ENCODE measurements at regions of chr1 and their contacts with region 1.

Region 1: GRCh38 chr1:46179138-46180081 is 3.1 kb upstream of the P3R3URF start:
- DNase-seq: no peak
- ATAC-seq: peak; percentile 88
- H3K4me3 ChIP-seq: no peak overlapping the region
- H3K27ac ChIP-seq: no peak overlapping the region
- H3K4me1 ChIP-seq: peaks cover 18% of the 10 kb centered on the region
- H3K27me3 ChIP-seq: no peaks in the 10 kb centered on the region
- CTCF ChIP-seq: peak; percentile 88 to 94 (median 91); a peak in 5 of 6 replicates
- EP300 ChIP-seq: no peak
- POLR2A ChIP-seq: no peak
- RAD21 ChIP-seq: peak; percentile 99

Region 2: DNA sequence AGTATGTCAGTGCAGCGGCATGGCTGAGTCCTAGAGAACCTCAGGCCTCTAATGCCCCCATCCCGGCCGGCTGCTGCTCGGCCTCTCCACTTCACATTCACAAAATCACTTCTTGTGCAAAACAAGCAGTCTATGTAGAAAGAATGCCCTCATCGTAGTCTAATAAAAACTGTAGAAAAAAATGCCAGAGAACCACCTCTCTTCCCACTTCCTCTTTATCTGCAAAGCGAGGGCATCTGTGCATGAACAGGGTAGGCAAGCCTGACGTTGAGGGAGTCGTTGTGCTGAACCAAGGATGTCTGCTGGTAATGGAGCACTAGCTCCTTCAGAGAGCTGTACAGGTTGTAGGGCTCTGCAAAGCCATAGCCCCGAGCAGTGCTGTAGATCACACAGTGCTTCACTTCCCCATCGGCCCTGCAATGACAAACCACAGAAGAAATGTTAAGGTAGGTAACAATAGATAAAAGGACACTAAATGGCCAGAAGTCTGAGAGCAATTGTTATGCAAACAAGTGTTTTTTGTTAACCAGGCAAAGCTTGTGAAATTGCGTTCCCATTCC is 135.9 kb before region 1 on chr1:
- CTCF ChIA-PET with region 1: interaction called, 293 read pairs
- POLR2A ChIA-PET with region 1: interaction called, 3 read pairs
- RAD21 ChIA-PET with region 1: interaction called, 9 read pairs
- SMC1A ChIA-PET with region 1: interaction called, 52 read pairs
- in situ Hi-C with region 1: loop called (anchors 5 kb)
- intact Hi-C with region 1: no loop called
- DNase-seq: peak; percentile 92
- ATAC-seq: peak; percentile 97
- H3K4me3 ChIP-seq: no peak overlapping the region
- H3K27ac ChIP-seq: peak overlapping the region; percentile 80
- H3K4me1 ChIP-seq: peaks cover 35% of the 10 kb centered on the region
- H3K27me3 ChIP-seq: no peaks in the 10 kb centered on the region
- CTCF ChIP-seq: no peak
- EP300 ChIP-seq: peak in 1 of 2 experiments; percentile 54; a peak in 2 of 4 replicates
- POLR2A ChIP-seq: peak; percentile 52; the same call in 1 of the 2 replicates
- RAD21 ChIP-seq: no peak; the same call in 1 of the 2 replicates

Region 3: DNA sequence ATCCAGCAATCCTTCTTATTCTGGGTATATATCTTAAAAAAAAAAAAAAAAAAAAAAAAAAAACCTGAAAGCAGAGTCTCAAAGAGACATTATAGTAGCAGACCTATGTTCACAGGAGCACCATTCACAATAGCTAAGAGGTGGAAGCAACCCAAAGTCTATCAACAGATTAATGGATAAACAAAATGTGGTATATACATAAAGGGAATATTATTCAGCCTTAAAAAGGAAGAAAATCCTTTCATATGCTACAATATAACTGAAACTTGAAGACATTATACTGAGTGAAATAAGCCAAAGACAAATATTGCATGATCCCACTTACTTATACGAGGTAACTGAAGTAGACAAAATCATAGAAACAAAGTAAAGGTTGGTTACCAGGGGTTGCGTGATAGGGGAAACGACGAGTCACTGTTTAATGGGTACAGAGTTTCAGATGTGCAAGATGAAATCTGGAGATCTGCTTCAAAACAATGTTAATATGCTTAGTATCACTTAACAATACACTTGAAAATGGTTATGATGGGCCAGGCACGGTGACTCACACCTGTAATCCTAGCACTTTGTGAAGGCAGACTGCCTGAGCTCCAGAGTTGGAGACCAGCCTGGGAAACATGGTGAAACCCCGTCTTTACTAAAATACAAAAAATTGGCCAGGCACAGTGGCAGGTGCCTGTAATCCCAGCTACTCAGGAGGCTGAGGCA is 76.5 kb before region 1 on chr1:
- CTCF ChIA-PET with region 1: no interaction called
- POLR2A ChIA-PET with region 1: no interaction called
- RAD21 ChIA-PET with region 1: no interaction called
- SMC1A ChIA-PET with region 1: no interaction called
- in situ Hi-C with region 1: no loop called
- intact Hi-C with region 1: no loop called
- DNase-seq: no peak
- ATAC-seq: no peak
- H3K4me3 ChIP-seq: no peak overlapping the region
- H3K27ac ChIP-seq: no peak overlapping the region
- H3K4me1 ChIP-seq: peaks cover 15% of the 10 kb centered on the region
- H3K27me3 ChIP-seq: no peaks in the 10 kb centered on the region
- CTCF ChIP-seq: no peak
- EP300 ChIP-seq: no peak
- POLR2A ChIP-seq: no peak
- RAD21 ChIP-seq: no peak

Region 4: DNA sequence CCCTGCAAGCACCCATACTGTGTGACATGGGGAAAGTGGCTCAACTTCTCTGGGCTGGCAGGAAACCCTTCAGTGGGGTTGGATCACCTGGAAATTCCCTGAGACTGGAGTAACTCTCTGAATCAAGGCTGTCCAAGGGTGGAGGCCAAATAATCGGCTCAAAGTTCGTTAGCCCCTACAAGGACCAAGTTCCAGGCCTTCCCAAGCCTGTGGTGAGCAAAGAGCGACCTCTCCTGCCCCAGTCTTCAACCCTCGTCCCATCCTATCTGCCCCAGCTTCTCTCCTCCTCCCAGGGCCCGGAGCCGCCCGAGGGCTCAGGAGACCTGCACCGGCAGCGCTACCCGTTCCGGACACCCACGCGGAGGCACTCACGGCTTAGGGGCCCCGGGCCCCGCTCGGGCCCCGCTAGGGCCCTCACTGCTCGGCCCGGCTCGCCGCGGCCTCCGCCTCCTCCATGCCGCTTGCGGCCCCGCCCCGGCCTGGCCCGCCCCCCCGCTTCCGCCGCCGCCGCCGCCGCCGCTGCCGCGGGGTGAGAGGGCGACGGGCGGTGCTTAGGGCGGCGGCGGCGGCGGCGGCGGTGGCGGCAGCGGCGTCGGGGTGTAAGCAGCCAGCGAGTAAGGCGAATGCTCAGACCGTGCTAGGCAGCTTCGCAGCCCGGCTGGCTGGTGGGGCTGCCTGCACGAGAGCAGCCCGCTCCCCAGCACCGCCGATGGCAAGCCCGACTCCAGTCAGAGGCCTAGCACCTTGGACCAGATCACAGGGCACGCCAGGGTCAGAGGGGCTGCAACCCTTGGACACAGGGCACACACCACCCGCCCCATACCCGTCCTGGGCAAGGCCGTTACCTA is 18.8 kb after region 1 on chr1 and contains the start of gene POMGNT1:
- CTCF ChIA-PET with region 1: interaction called, 30 read pairs
- POLR2A ChIA-PET with region 1: interaction called, 5 read pairs
- RAD21 ChIA-PET with region 1: interaction called, 13 read pairs
- SMC1A ChIA-PET with region 1: interaction called, 10 read pairs
- in situ Hi-C with region 1: no loop called
- intact Hi-C with region 1: no loop called
- DNase-seq: no peak
- ATAC-seq: peak; percentile 94
- H3K4me3 ChIP-seq: peak within 1 kb of the TSS; percentile 98
- H3K27ac ChIP-seq: peak within 1 kb of the TSS; percentile 59
- H3K4me1 ChIP-seq: peaks cover 9% of the 10 kb centered on the region
- H3K27me3 ChIP-seq: no peaks in the 10 kb centered on the region
- CTCF ChIP-seq: peak in 2 of 3 experiments; percentile 20 to 21; a peak in 2 of 6 replicates
- EP300 ChIP-seq: no peak
- POLR2A ChIP-seq: peak; percentile 93
- RAD21 ChIP-seq: peak; percentile 28; the same call in 1 of the 2 replicates
- polyA plus RNA-seq, gene POMGNT1: 8.6 to 29.0 TPM

Measured in GM12878 (cell line).